IMR-90 (cell line): ENCODE measurements at regions of chr19 and their contacts with region 1.

Region 1: DNA sequence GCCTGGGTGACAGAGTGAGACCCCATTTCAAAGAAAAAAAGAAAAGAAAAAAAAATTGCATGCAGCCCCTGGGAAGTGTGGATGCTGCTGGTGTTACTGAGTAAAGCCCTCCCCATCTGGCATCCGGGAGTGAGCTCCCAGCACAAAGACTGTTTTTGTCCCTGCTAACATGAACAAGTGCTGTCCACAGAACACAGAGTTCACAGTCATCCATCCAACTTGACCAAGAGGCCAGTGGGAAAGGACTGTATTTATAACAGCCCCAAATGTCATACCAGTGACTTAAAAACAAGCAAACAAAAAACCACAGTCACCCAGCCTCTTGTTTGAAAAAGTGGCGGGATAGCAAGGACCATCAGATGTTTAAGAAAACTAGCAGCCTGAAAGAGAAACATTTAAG is 10.8 kb downstream of the FBXO17 start:
- DNase-seq: no peak
- ATAC-seq: no peak
- H3K4me3 ChIP-seq: no peak overlapping the region
- H3K27ac ChIP-seq: no peak overlapping the region
- H3K4me1 ChIP-seq: no peaks in the 10 kb centered on the region
- H3K27me3 ChIP-seq: no peaks in the 10 kb centered on the region
- CTCF ChIP-seq: no peak
- POLR2A ChIP-seq: no peak
- RAD21 ChIP-seq: no peak

Region 2: GRCh38 chr19:39031368-39032062 is 66.8 kb after region 1 on chr19:
- CTCF ChIA-PET with region 1: no interaction called
- POLR2A ChIA-PET with region 1: no interaction called
- dilution Hi-C with region 1: no loop called
- in situ Hi-C with region 1: no loop called
- intact Hi-C with region 1: loop called (anchors 1 kb)
- DNase-seq: no peak
- ATAC-seq: peak; percentile 85
- H3K4me3 ChIP-seq: peak overlapping the region; percentile 55
- H3K27ac ChIP-seq: no peak overlapping the region
- H3K4me1 ChIP-seq: 0 out of 2 replicates have a peak, but pooled peaks cover 2% of the 10 kb centered on the region
- H3K27me3 ChIP-seq: peaks cover 14% of the 10 kb centered on the region
- CTCF ChIP-seq: no peak
- POLR2A ChIP-seq: no peak
- RAD21 ChIP-seq: no peak

Region 3: DNA sequence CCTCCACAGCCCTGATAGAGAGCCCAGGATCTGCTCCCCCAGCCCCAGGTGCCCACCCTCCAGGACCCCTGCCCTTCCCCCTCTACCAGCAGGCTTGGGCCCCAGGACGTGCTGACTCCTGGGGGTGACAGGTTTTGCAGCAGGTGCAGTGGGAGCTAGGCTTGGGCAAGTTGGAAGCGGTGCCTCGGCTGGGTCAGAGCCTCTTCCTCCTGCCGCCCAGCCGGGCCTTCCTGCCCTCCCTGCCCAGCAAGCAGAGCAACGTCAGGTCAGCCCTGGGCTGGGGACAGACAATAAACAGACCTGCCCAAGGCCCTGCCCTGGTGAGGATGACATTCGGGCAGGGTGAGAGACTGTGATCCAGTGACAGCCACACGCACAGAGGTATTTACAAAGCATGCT is 222.8 kb after region 1 on chr19:
- CTCF ChIA-PET with region 1: no interaction called
- POLR2A ChIA-PET with region 1: no interaction called
- dilution Hi-C with region 1: no loop called
- in situ Hi-C with region 1: no loop called
- intact Hi-C with region 1: loop called (anchors 1 kb)
- DNase-seq: no peak
- ATAC-seq: peak; percentile 7; the same call in 1 of the 2 replicates
- H3K4me3 ChIP-seq: no peak overlapping the region
- H3K27ac ChIP-seq: no peak overlapping the region
- H3K4me1 ChIP-seq: no peaks in the 10 kb centered on the region
- H3K27me3 ChIP-seq: peaks cover 5% of the 10 kb centered on the region; the same call in 1 of the 2 replicates
- CTCF ChIP-seq: no peak
- POLR2A ChIP-seq: no peak
- RAD21 ChIP-seq: no peak